ENCODE measurements at regions of chr19 and their contacts with region 1.

Region 1: DNA sequence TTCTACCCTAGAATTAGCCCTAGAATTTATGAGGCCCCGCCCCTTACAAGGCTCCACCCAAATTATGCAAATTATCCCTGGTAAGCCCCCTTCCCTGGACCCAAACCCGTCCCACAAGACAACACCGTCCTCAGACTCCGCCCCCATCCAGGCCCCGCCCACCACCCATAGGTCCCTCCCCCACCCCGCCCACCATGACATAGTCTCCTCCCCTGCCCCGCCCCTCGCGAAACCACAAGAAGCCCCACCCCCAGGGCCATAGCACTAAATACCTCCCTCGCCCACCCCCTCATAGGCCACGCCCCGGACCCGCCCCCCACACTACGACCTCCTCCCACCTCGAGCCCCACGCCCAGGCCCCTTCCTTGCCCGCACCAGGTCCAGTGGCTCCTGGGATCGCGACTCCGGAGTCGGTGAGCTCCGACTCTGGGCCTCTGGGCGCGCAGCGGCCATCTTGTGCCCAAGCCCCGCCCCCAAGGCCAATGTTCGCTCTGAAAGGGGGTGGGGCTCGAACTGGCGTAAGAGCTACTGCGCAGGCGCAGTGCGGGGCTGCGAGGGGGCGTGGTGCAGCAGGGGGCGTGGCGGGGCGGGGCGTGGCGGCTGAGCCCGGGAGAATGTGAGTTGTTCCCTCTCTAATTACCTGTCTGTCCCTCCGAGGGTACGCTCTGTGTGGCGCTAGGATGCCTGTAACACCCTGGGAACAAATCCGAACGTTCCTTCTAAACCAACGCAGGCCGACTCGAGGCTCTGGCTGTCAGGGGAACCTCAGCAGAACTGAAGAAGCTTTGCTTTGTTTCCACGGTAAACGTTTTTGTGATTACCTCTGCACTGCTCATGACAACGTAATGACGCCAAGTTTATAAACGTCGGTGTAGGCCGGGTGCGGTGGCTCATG is at the start of gene ZNF784:
- DNase-seq: peak; percentile 91
- H3K4me3 Mint-ChIP-seq: peak within 1 kb of the TSS; percentile 90
- H3K27ac Mint-ChIP-seq: peak within 1 kb of the TSS; percentile 98
- H3K4me1 Mint-ChIP-seq: peaks cover 46% of the 10 kb centered on the region
- H3K27me3 Mint-ChIP-seq: peaks cover 20% of the 10 kb centered on the region
- total RNA-seq, gene ZNF784: 3.0 and 4.9 TPM in 2 replicates

Region 2: DNA sequence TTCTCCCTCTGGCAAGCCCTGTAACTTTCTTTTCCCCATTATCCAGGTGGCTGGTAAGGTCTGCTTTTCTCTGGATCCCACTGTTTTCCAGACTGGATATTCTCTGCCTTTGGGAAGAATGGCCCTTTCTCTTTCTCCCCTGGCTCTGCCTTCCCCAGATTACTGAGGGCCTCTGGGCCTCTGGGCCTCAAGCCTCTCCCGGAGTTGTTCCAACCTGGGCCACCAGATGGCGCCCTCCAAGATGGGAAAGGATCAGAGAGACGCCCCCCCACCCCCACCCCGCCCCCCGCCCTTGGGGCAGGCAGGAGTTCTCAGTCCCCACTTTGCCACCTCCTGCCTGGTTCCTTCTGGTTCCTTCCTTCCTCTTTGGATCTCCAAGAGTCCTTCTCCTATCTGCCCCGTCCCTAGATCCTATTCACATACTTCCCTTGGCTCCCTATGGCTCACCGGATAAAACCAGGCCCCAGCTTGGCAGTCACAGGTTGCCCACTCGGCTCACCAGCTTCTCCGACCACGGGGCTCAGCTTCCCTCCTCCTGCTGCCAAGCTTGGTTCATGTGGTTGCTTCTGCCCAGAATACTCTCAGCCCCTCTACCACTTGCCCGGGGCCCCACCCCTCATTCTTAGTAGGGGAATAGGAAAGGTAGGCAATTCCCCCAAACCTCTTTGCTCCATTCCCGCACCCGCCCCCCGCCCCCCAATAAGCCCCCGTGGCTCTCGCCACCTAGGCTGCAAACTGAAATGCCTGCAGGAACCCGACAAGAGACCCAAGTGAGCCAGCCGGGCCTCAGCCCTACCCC is 535.6 kb before region 1 on chr19:
- intact Hi-C with region 1: loop called (anchors 10 kb)
- DNase-seq: peak; percentile 62
- H3K4me3 Mint-ChIP-seq: peak overlapping the region; percentile 49
- H3K27ac Mint-ChIP-seq: no peak overlapping the region
- H3K4me1 Mint-ChIP-seq: peaks cover 16% of the 10 kb centered on the region
- H3K27me3 Mint-ChIP-seq: peaks cover 29% of the 10 kb centered on the region

Region 3: DNA sequence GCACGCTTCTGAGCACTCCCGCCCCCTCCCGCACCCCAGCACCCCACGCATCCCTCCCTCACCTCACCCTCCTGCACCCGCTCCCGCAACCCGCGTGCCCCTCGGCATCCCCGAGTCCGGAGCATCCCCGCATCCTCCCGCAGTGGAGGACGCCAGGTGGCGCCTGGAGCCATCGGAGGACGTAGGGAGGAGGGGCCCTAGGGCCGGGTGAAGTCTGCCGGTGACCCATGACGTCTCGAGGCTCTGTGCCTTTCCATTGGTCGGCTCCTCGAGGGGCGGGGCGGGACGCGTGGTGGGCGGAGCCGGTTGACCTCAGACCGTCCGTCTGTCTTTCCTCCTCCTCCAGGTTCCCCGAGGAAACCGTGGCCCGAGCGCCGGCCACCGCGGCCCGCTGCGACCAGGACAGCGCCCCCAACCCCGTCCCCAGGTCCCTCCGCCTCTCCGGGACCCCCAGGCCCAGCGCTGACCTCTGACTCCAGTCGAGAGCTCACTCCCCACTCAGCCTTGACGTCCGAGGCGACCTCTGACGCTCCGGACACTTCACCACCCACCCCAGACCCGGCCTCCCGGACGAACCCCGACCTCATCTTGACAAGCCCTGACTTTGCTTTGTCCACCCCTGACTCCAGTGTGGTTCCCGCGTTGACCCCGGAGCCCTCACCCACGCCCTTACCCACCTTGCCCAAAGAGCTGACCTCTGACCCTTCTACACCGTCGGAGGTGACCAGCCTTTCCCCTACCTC is 107.3 kb before region 1 on chr19:
- intact Hi-C with region 1: loop called (anchors 1 kb)
- DNase-seq: peak; percentile 88
- H3K4me3 Mint-ChIP-seq: peak overlapping the region; percentile 66
- H3K27ac Mint-ChIP-seq: peak overlapping the region; percentile 68
- H3K4me1 Mint-ChIP-seq: no peaks in the 10 kb centered on the region
- H3K27me3 Mint-ChIP-seq: peaks cover 2% of the 10 kb centered on the region

Region 4: GRCh38 chr19:55599468-55600279 is 24.7 kb before region 1 on chr19 and contains the start of gene FIZ1:
- intact Hi-C with region 1: loop called (anchors 1 kb)
- DNase-seq: peak; percentile 95
- H3K4me3 Mint-ChIP-seq: peak within 1 kb of the TSS; percentile 93
- H3K27ac Mint-ChIP-seq: peak within 1 kb of the TSS; percentile 98
- H3K4me1 Mint-ChIP-seq: peaks cover 28% of the 10 kb centered on the region
- H3K27me3 Mint-ChIP-seq: no peaks in the 10 kb centered on the region
- total RNA-seq, gene FIZ1: 24.2 and 24.7 TPM in 2 replicates

Region 5: DNA sequence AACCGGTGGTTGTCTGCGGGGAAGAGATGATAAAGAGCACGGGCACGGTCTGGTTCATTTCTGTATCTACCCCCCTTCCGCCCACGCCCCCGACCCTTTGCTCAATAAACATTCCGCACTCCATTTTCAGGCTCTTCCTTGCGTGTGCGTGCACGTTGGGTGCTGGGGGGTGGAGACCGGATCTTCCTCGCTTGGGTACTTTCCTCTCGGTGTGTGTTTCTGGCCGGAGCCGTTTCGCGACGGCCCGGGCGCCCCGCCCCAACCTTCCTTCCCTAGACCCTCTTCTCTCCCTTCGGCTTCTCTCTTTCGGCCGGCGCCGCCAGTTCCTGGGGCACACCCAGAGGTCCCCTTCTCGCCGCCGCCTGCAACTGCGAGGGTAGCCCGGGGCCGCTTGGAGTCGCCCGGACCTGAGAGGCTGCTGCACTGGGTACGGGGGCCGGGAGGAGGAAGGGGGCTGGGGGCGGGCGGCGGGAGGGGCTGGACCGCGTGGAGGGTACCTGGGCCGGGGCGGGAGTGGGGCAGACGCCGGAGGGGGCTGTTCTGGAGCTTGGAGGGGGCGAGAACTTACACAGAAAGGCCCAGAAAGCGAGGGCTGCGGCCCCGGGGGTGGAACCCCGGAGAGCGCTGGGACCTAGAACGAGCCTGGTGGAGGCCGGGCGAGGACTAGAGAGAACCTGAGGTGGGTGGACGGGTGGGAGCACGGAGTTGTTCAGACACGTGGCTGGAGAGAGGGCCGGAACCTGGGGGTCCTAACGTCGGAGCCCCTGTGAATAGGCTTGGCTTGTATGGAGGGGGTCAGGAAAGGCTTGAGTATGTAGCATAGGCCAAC is 19.2 kb after region 1 on chr19 and contains the start of gene ZNF581:
- intact Hi-C with region 1: loop called (anchors 2 kb)
- DNase-seq: peak; percentile 77
- H3K4me3 Mint-ChIP-seq: peak within 1 kb of the TSS; percentile 100
- H3K27ac Mint-ChIP-seq: peak within 1 kb of the TSS; percentile 99
- H3K4me1 Mint-ChIP-seq: peaks cover 43% of the 10 kb centered on the region
- H3K27me3 Mint-ChIP-seq: no peaks in the 10 kb centered on the region
- total RNA-seq, gene ZNF581: 35.6 and 36.4 TPM in 2 replicates

Region 6: GRCh38 chr19:55674841-55675660 is 50.7 kb after region 1 on chr19 and contains the start of gene EPN1:
- intact Hi-C with region 1: loop called (anchors 1 kb)
- DNase-seq: peak; percentile 94
- H3K4me3 Mint-ChIP-seq: peak within 1 kb of the TSS; percentile 98
- H3K27ac Mint-ChIP-seq: peak within 1 kb of the TSS; percentile 95
- H3K4me1 Mint-ChIP-seq: peaks cover 47% of the 10 kb centered on the region
- H3K27me3 Mint-ChIP-seq: no peaks in the 10 kb centered on the region
- total RNA-seq, gene EPN1: 46.0 and 48.3 TPM in 2 replicates